Cardiac septum (tissue), 1 donor: ENCODE measurements at regions of chr4 and their contacts with region 1.

Region 1: DNA sequence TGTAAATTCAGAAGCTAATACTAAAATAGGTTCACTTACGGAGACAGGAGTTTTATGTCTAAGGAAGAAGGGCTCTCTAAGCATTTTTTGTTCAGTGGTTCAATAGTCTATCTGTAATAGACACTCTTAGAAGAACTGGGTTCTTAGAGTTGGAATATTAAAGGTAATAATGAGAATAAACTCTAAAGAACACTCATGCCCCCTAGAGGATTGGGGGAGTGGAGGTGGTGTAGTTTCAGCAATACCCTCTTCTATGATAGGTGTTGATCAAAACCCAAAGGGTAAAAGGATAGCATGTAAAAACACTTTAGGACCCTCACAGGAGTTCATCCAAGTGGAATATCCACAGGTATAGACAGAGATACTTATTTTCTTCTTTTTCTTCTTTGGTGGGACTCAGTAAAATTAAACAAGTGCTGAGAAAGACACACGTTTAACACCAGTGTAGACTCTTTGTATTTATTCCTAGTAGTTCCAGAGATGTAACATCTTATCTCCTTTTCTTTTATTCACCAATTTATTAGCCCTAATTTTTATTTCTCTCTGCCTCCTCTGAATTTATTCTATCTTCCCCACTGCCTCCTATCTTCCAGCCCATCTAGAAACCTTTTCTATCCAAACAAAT is 25.7 kb upstream of the MND1 start:
- DNase-seq: no peak

Region 2: GRCh38 chr4:153142700-153143438 is 175.9 kb before region 1 on chr4:
- intact Hi-C with region 1: loop called (anchors 1 kb)
- DNase-seq: no peak

Region 3: DNA sequence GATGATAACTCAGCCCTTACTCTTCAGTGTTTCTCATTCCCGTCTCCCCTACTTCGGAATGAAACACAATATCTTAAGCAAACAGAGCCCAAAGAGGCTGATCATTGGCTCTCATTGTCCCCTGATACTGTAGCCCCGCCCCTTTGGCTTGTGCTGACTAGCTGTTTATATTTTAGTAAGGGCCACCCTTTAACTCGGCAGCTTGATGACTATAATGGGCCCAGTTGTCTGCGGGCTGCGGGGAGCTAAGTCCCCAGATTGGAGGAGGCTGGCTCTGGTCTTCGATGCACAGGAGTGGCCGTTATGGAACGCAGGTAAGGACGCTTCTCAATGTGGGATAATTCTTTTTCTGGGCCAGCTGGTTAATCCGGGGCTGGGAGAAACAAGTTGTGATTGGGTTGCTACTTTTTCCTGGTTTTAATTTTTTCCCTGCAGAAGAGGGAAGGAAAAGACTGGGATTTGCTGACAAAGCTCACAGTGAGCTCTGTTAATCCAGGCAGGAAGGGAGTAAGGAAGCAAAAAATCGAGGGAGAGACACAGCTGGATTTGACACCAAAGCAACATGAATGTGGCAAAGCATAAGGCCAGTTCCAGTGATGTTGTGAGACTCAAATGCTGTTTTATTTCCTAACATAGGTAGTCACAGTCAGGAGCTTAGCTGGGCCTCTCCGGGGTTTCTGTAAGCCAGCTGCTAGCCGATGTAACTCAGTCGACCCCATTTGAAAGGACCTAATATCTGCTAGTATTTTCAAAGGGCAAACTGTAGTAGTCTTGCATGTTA is 114.4 kb before region 1 on chr4 and contains the start of gene TRIM2:
- intact Hi-C with region 1: loop called (anchors 2 kb)
- DNase-seq: no peak
- total RNA-seq, gene TRIM2: 23.4 TPM

Region 4: DNA sequence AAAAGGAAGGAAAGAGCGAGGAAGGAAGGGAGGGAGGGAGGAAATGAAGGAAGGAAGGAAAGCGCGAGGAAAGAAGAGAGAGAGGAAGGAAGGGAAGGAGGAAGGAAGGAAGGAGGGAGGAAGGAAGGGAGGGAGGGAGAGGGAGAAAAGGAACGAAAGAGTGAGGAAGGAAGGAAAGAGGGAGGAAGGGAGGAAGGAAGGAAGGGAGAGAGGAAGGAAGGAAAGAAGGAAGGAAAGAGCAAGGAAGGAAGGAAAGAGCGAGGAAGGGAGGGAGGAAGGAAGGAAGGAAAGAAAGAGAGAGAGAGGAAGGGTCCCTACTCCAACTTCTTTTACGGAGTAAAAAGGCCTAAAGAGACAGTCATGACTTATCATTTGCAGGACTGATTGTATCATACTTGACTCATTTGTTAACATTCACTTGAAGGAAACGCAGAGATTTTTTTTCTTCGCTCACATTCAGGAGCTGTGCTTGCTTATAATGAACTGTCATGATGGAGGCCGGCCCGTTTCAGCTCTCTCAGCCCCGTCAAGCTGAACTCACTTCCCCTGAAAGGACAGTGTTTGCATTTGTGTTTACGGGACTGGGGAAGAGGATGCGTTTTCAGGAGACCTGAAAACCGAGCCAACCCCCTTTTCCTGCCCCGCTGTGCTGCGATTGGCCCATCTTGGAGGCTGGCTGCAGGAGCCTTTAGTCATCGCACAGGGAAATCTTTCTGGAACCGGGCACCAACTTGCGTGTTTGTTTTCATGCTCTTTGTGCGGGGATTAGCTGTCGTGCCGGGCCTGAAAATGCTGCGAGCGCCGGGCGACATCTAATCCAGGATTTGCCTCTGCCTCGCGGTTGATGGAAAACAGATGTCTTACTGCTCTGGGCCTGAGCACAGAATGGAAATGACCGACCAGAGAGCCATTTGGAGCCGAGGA is 96.8 kb before region 1 on chr4:
- intact Hi-C with region 1: loop called (anchors 5 kb)
- DNase-seq: peak; percentile 82

Region 5: DNA sequence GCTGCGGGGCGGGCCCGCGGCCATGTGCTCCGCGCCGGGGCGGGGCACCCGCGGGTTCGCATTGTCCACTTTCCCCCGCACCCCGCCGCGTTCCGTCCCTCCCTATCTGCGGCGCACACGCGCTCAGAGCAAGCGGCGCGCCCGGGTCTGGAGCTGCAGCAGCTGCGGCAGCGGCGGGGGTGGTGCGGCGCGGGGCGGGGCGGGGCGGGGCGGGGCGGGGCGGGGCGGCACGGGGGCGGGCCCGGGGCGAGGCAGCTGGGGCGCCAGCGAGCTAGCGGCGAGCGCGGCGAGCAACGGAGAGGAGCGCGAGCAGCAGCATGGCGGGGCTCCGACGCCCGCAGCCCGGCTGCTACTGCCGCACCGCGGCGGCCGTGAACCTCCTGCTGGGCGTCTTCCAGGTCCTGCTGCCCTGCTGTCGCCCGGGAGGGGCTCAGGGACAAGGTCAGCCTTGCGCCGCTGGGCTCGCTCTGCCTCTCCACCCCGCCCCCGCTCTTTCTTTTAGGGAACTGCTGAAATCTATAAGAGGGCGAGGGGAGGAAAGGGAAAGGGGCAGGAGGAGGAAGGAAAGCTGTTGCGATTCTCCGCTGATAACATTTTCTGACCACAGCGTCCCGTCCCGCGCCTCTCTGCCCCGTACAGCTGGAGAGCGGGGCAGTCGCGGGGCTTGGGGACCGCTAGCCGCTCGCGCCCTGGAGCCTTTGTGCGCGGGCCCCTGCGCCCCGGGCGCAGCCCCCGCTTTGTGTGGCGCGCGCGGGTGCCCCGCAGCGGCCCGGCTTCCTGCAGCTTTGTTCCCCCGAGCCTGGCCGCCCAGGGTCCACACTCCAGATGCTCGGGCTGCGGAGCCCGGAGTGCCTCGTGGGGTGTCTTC is 147.5 kb after region 1 on chr4 and contains the start of gene TMEM131L:
- intact Hi-C with region 1: no loop called
- DNase-seq: peak; percentile 91
- total RNA-seq, gene TMEM131L: 21.2 TPM